ENCODE measurements at regions of chr19 and their contacts with region 1.

Region 1: GRCh38 chr19:3178973-3179738 is 587 bp downstream of the S1PR4 start:
- DNase-seq: peak; percentile 33
- H3K4me3 ChIP-seq: peak overlapping the region; percentile 71
- H3K27ac ChIP-seq: peak overlapping the region; percentile 97
- H3K4me1 ChIP-seq: peaks cover 63% of the 10 kb centered on the region
- CTCF ChIP-seq: no peak; the same call in 1 of the 2 replicates

Region 2: DNA sequence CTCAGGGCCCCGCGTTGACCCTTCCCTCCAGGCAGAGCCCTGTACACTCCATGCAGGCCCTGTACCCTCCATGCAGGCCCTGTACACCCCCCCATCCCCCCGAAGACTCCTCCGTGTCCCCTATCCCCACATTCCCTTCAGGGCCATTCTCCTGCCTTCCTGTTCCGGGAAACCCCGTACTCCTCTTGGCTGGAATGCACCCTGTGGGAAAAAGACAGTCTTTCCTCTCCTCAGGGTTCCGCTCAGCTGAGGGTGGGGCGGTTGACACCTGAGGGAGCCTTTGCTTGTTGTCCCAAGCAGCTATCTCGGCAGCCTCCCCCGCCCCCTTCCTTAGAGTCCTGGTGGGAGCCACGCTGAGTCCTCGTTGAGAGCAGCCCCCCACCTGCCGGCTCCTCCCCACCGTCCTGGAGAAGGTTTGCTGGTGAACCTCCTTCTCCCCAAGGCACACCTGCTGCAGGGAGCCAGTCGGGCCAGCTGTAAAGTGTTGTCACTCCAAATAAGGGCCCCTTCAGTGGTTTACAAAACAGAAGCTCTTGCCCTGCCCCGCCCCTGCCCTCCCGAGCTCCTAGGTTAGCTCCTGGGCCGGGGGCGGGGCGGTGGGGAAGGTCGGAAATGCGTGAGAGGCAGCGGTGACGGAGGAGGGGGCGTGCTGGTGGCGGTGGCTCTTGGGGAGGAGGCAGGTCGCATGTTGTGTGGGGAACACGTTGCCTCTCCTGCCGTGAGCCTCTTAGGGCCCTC is 83.5 kb before region 1 on chr19:
- CTCF ChIA-PET with region 1: interaction called, 13 read pairs
- POLR2A ChIA-PET with region 1: no interaction called
- intact Hi-C with region 1: no loop called
- DNase-seq: no peak
- H3K4me3 ChIP-seq: peak overlapping the region; percentile 93
- H3K27ac ChIP-seq: no peak overlapping the region
- H3K4me1 ChIP-seq: peaks cover 27% of the 10 kb centered on the region
- CTCF ChIP-seq: no peak

Measured in OCI-LY7 (cell line).